ENCODE measurements at regions of chr2 and their contacts with region 1.

Region 1: DNA sequence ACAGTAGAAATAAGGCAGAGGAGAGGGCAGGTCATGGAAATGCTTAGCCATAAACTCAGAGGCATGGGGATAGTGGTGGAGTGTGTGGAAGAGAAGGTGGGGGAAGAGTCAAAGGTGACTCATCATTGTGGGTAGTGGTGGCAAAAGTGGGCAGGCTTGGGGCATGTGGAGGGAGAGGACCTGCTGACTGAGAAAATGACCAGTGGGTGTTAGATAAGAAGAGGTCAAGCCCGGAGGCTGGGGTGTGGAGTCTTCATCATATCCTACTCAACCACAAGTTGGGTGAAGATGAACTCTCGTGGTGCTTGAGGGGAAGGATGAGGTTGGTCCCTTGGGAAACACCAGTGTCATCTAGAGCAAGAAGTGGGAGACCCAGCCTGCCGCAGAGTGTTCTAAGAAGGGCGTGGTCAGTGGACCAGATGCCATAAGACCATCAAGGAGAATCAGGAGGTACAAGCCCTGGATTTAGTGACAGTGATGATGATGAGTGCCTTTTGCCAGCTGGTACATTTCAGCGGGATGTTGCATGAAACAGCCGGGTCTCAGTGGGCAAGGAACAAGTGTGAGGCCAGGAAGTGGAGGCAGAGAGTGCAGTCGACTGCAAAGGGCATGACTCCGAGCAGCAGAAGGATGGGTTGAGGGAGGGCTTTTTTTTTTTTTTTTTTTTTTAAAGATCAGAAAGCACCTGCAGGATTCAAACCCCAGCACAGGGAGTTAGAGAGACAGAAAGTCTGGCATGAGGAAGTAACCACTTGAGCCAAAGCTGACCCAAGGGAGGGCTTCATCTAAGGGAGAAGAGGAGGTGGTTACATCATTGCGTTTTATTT is 122.6 kb upstream of the SPRED2 start:
- H3K4me3 Mint-ChIP-seq: no peak overlapping the region
- H3K27ac Mint-ChIP-seq: no peak overlapping the region
- H3K4me1 Mint-ChIP-seq: peaks cover 21% of the 10 kb centered on the region
- H3K27me3 Mint-ChIP-seq: peaks cover 10% of the 10 kb centered on the region

Region 2: GRCh38 chr2:65186872-65187851 is 367.8 kb before region 1 on chr2:
- intact Hi-C with region 1: loop called (anchors 10 kb)
- H3K4me3 Mint-ChIP-seq: no peak overlapping the region
- H3K27ac Mint-ChIP-seq: peak overlapping the region; percentile 4
- H3K4me1 Mint-ChIP-seq: peaks cover 11% of the 10 kb centered on the region
- H3K27me3 Mint-ChIP-seq: peaks cover 7% of the 10 kb centered on the region

Region 3: DNA sequence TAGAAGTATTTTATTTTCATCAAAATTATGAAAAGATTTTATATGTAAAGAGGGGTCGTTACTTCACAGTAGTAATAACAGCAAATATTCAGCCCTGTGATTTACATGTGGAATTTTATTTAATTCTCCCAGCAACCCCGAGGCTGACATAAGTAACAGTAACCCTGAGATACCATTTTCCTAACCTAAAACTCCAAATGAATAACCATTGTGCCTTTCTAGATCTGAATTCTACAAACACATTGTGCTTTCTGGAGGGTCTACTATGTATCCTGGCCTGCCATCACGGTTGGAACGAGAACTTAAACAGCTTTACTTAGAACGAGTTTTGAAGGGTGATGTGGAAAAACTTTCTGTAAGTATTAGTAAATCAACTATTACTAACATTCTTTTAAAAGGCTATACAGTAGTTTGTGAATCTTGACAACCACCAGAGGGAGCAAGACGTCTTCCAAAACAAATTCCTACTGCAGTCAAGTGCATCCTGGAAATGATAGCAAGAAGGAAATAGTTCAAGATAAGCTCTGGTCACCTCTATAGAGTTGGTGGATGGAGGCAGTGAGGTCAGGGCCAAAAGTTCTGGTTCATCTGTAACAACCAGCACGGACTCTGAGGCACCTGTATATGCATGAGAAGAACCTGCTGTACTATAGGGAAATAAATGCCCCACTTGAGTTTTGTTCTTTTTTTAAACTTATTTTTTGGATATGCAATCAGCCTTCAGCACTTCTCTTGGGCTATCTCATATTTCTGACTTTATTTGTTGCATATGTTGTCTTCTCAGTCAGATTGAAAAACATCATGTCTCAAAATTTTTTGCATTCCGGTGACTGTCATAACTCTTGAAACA is 289.9 kb before region 1 on chr2:
- intact Hi-C with region 1: loop called (anchors 2 kb)
- H3K4me3 Mint-ChIP-seq: no peak overlapping the region
- H3K27ac Mint-ChIP-seq: no peak overlapping the region
- H3K4me1 Mint-ChIP-seq: peaks cover 24% of the 10 kb centered on the region
- H3K27me3 Mint-ChIP-seq: no peaks in the 10 kb centered on the region

Region 4: DNA sequence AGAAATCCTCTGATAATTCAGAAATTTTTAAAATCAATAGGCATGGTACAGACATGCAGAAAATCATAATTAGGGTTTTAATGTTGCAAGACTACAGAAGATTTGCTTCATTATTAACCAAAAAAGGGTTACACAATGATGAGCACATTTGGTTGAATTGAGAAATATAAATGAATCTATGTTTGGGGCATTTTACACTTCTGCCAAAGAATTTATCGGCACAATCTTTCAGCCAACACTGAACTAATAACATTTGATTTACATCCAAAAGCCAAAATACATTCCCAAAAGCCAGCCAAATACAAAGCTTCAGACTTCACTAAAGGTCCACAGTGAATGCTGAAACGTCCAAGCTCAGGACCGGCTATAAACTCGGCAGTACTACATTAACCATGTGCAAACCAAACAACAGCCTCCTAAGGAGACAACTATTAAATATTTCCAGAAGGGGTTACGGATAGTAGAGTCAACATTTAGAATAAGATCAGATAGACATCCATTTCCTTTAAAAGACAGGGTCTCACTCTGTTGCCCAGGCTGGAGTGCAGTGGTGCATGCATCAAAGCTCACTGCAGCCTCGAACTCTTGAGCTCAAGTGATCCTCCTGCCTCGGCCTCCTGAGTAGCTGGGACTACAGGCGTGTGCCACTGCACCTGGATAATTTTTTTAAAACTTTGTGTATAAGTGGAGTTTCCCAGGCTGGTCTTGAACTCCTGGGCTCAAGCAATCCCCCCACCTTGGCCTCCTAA is 152.0 kb before region 1 on chr2:
- intact Hi-C with region 1: no loop called
- H3K4me3 Mint-ChIP-seq: no peak overlapping the region
- H3K27ac Mint-ChIP-seq: no peak overlapping the region
- H3K4me1 Mint-ChIP-seq: peaks cover 36% of the 10 kb centered on the region
- H3K27me3 Mint-ChIP-seq: no peaks in the 10 kb centered on the region

Region 5: DNA sequence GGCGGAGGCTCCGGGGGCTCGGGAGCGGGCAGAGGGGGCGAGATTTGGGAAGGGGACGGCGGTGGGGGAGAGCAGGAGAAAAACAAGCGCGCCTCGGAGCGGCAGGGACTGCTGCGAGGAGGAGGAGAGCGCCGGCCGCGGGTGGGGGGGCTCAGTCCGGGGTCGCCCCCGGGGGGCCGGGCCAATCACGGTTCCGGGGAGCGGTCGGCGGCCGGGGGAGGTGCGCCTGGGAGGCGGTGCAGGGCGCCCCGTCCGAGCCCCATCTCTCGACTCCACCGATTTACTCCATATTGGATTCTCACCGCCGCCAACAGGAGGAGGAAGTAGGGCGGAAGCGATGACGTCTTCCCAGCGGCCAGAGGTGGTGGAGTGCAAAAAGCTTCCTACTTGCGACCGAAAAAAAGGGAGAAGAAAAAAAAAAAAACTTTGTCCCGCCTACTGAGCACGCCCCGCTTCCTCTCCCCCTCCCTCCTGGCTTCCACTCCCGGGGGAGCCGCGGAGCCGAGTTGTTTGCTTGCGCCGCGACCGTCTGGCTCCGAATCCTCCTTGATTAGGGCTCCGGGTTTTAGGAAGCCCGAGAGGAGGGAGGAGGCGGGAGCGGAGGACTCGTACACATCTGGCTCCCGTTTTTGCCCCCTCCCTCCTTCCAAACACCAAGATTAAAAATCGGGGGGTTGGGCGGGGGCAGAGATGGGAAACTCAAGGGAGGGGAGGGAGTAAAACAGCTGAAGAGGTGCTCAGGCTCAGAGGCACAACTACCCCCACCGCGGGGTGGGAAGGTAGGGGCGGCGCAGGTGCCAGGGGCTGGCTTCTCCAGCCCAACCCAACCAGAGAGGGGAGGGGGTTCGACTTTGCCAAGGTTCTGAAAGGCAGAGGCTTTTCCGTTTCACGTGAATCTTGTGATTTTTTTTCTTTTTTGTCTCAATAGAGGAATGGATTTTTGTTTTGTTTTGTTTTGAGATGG is 122.5 kb before region 1 on chr2 and contains the start of gene SPRED2:
- intact Hi-C with region 1: loop called (anchors 5 kb)
- H3K4me3 Mint-ChIP-seq: peak within 1 kb of the TSS; percentile 87
- H3K27ac Mint-ChIP-seq: peak within 1 kb of the TSS; percentile 87
- H3K4me1 Mint-ChIP-seq: peaks cover 21% of the 10 kb centered on the region
- H3K27me3 Mint-ChIP-seq: peaks cover 44% of the 10 kb centered on the region

Region 6: DNA sequence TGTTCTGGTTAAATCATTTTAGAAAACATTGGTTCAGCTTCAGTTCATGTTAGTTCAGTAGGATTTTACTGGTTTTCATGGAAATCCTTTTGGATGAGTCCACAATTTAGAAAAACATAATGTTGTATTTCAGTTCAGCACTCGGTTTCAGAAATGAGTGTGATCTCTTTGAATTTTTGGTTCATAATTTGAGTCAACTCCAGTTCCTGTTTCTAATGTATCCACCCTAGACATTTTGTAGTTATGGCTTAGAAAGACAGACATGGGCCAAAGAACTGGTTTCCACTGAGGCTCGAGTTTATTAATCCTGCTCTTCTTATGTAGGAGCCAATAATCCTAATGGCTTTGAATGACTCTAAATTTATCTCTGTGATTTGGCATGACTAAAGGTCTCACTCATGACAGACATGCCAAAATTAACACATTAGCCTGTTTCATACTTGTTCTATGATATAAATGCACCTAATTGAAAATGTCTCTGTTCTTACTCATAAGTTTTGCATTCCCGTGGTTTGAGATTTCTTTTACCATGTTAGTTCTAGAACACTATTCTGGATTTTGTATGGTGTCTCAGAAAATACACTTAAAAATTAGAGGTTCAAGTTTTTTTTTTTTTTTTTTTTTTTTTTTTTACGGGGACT is 40.3 kb before region 1 on chr2:
- intact Hi-C with region 1: no loop called
- H3K4me3 Mint-ChIP-seq: no peak overlapping the region
- H3K27ac Mint-ChIP-seq: no peak overlapping the region
- H3K4me1 Mint-ChIP-seq: no peaks in the 10 kb centered on the region
- H3K27me3 Mint-ChIP-seq: peaks cover 1% of the 10 kb centered on the region

Measured in dendritic cell treated with granulocyte-macrophage colony-stimulating factor and Interleukin-4, amounts not matched to agents 40 ng/mL and 50 ng/mL, for 4 days (primary cell).